ENCODE measurements at regions of chr11 and their contacts with region 1.

Region 1: DNA sequence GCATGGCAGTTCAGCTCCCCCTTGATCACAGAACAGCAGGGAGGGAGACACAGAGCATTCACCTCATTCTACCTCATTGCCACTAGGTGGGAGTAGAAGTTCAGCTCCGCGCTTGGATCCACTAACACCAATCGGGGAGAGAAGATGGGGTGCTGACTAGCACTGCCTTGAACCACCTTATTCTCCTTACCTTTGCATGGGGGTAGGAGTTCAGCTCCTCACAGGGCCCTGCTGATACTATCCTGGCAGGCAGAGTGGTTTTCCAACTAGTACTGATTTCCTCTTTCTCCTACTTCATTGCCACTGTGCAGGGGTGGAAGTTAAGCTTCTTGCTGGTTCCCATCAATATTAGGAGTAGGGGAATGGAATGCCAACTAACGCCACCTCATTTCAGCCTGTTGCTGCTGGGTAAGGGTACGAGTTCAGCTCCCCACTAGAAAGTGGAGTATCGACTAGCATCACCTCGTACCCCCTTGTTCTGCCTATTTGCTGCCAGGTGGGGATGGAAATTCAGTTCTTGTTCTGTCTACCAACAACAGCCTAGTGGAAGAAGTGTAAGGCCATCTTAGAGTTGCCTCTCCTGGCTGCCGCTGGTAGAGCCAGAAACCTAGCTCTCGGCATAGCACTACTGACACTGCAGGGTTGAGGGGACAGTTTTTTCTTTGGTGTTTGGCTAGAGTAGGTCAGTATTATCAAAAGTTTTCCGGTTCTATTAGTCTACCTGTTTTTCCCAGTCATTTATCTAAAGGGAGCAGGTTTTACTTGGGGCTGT is 550.9 kb upstream of the CCDC90B start:
- DNase-seq: peak; percentile 61 to 68
- H3K4me3 ChIP-seq: no peak overlapping the region
- H3K4me3 Mint-ChIP-seq: no peak overlapping the region
- H3K27ac Mint-ChIP-seq: no peak overlapping the region
- H3K4me1 ChIP-seq: no peaks in the 10 kb centered on the region
- H3K4me1 Mint-ChIP-seq: no peaks in the 10 kb centered on the region
- H3K27me3 ChIP-seq: no peaks in the 10 kb centered on the region
- H3K27me3 Mint-ChIP-seq: peaks cover 28% of the 10 kb centered on the region
- CTCF ChIP-seq: peak; percentile 95 to 98

Region 2: DNA sequence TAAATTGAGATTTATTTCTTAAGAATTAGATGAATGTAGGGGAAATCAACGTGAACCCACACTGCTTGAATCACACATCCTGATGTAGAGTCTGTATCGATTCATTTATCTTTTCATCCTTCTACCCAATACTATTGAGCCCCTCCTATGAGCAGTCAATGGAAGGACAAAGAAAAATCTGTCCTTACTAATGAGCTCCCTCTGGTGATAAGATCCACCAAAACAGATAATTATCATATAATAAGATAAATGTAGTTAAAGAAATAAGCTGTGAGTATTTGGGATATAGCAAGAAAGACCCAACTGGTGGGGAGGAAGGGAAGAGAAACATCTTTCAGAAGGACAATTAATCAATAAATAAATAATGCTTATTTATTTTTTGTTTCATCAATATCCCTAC is 165.8 kb before region 1 on chr11:
- CTCF ChIA-PET with region 1: no interaction called
- POLR2A ChIA-PET with region 1: no interaction called
- intact Hi-C with region 1: no loop called
- DNase-seq: no peak
- H3K4me3 ChIP-seq: no peak overlapping the region
- H3K4me3 Mint-ChIP-seq: no peak overlapping the region
- H3K27ac Mint-ChIP-seq: no peak overlapping the region
- H3K4me1 ChIP-seq: peaks cover 10% of the 10 kb centered on the region; the same call in 1 of the 2 replicates
- H3K4me1 Mint-ChIP-seq: no peaks in the 10 kb centered on the region
- H3K27me3 ChIP-seq: no peaks in the 10 kb centered on the region
- H3K27me3 Mint-ChIP-seq: no peaks in the 10 kb centered on the region
- CTCF ChIP-seq: peak in 1 of 2 experiments; percentile 11

Region 3: DNA sequence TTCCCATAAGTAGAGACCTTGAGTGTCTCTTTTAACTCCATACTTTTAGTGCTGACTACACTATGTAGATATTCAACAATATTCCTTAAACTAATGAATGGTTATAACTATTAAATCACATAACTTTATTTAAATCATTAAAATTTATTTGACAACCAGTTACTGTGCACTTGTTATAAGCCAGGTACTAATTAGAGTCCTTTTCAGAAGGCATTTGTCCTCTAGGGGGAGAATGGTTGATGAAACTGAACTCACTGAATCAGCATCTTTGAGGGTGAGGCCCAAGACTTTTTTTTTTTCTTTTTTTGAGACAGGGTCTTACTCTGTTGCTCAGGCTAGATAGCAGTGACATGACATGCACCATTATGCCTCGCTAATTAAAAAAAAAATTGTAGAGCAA is 35.3 kb before region 1 on chr11:
- CTCF ChIA-PET with region 1: no interaction called
- POLR2A ChIA-PET with region 1: no interaction called
- intact Hi-C with region 1: no loop called
- DNase-seq: no peak
- H3K4me3 ChIP-seq: no peak overlapping the region
- H3K4me3 Mint-ChIP-seq: no peak overlapping the region
- H3K27ac Mint-ChIP-seq: no peak overlapping the region
- H3K4me1 ChIP-seq: no peaks in the 10 kb centered on the region
- H3K4me1 Mint-ChIP-seq: no peaks in the 10 kb centered on the region
- H3K27me3 ChIP-seq: no peaks in the 10 kb centered on the region
- H3K27me3 Mint-ChIP-seq: peaks cover 12% of the 10 kb centered on the region
- CTCF ChIP-seq: peak; percentile 32 to 48

Region 4: GRCh38 chr11:83815736-83816135 is 21.3 kb before region 1 on chr11:
- CTCF ChIA-PET with region 1: no interaction called
- POLR2A ChIA-PET with region 1: no interaction called
- intact Hi-C with region 1: no loop called
- DNase-seq: no peak
- H3K4me3 ChIP-seq: no peak overlapping the region
- H3K4me3 Mint-ChIP-seq: no peak overlapping the region
- H3K27ac Mint-ChIP-seq: no peak overlapping the region
- H3K4me1 ChIP-seq: no peaks in the 10 kb centered on the region
- H3K4me1 Mint-ChIP-seq: no peaks in the 10 kb centered on the region
- H3K27me3 ChIP-seq: no peaks in the 10 kb centered on the region
- H3K27me3 Mint-ChIP-seq: no peaks in the 10 kb centered on the region
- CTCF ChIP-seq: no peak

Region 5: DNA sequence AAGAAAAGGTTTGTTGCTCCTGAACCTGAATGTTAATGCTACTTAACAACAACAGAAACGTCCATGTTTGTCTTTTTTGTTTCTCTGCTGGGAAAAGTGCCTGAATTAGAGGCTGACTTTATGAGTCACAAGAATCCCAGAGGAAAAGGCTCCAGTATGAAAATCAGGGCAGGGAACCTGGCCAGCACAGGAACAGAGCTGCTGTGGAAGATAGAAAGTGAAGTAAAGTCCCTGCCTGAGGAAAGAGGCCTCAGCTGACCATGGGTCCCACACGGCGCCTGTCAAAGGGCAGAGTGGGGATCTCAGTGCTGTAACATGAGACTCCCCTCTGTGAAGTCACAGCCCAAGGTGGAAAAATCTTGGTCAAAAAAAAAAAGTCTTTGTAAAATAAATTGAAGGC is 81.4 kb after region 1 on chr11:
- CTCF ChIA-PET with region 1: no interaction called
- POLR2A ChIA-PET with region 1: no interaction called
- intact Hi-C with region 1: loop called (anchors 5 kb)
- DNase-seq: no peak
- H3K4me3 ChIP-seq: no peak overlapping the region
- H3K4me3 Mint-ChIP-seq: no peak overlapping the region
- H3K27ac Mint-ChIP-seq: no peak overlapping the region
- H3K4me1 ChIP-seq: peaks cover 24% of the 10 kb centered on the region
- H3K4me1 Mint-ChIP-seq: peaks cover 6% of the 10 kb centered on the region
- H3K27me3 ChIP-seq: no peaks in the 10 kb centered on the region
- H3K27me3 Mint-ChIP-seq: no peaks in the 10 kb centered on the region
- CTCF ChIP-seq: no peak

Region 6: DNA sequence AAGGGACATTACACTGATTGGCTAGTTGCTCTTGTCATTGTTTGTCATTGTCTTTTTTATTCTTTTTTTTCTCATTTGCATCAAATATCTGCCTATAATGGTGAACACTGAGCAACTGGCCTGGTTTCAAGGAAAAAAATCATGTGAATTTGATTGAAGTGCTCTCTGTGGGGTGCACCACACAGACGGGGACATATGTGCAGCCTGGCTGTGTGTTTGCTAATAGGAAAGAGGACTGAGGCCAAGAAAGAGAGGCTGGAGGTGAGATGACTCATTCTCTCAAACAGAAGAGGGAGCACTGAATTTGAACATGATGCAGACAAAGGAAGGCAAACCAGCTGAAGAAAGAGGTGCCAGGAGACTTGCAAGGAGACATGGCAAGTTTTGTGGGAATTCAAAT is 134.0 kb after region 1 on chr11:
- CTCF ChIA-PET with region 1: interaction called, 3 read pairs
- POLR2A ChIA-PET with region 1: no interaction called
- intact Hi-C with region 1: loop called (anchors 5 kb)
- DNase-seq: no peak
- H3K4me3 ChIP-seq: no peak overlapping the region
- H3K4me3 Mint-ChIP-seq: no peak overlapping the region
- H3K27ac Mint-ChIP-seq: no peak overlapping the region
- H3K4me1 ChIP-seq: no peaks in the 10 kb centered on the region
- H3K4me1 Mint-ChIP-seq: no peaks in the 10 kb centered on the region
- H3K27me3 ChIP-seq: no peaks in the 10 kb centered on the region
- H3K27me3 Mint-ChIP-seq: peaks cover 5% of the 10 kb centered on the region
- CTCF ChIP-seq: no peak

Region 7: DNA sequence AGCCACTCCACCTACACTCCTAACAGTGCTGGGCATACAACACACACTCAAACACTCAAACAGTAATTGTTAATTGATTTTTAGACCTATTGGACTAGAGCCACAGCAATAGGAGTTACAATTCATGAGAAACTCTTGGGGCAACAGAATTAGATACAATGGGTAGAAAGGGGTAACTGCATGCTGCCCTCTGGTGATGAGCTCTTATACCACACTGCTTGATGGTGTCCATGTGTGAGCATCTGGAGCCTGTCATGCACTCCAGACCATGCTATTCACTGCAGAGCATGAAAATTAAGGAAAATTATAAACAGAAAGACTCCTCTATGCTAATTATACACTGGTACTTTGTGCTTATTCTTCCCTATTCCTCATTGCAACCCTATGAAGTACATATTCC is 424.6 kb after region 1 on chr11:
- CTCF ChIA-PET with region 1: interaction called, 4 read pairs
- POLR2A ChIA-PET with region 1: no interaction called
- intact Hi-C with region 1: loop called (anchors 1 kb)
- DNase-seq: no peak
- H3K4me3 ChIP-seq: no peak overlapping the region
- H3K4me3 Mint-ChIP-seq: no peak overlapping the region
- H3K27ac Mint-ChIP-seq: no peak overlapping the region
- H3K4me1 ChIP-seq: no peaks in the 10 kb centered on the region
- H3K4me1 Mint-ChIP-seq: no peaks in the 10 kb centered on the region
- H3K27me3 ChIP-seq: no peaks in the 10 kb centered on the region; the same call in 1 of the 2 replicates
- H3K27me3 Mint-ChIP-seq: peaks cover 5% of the 10 kb centered on the region
- CTCF ChIP-seq: peak; percentile 15 to 41

Region 8: DNA sequence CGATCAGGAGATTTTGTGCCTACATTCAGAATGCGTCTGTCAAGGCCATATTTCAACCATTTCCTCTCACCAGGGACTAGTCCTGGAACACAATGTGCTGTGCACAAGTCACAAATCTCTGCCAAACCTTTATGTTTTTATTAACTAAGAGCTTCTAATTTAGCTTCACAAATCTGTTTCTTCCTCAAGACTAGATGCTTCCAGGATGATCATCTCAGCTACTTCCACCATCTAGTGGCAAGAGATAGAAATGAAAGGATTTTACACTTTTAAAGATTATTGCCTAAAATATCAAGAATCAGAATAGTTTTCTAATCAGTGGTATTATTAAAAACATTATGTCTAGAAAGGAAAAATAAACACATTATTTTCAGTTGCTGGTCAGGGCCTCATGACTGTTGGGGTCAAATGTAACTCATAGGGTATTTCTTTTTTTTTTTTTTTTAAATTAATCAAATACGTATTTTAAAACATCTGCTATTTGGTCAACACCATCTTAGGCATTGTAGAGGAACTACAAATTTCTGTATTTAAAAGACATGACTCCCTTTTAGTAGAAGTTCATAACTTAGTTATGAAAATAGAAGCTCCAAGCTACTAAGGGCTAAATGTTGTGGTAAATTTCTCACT is 687.5 kb after region 1 on chr11:
- CTCF ChIA-PET with region 1: interaction called, 5 read pairs
- POLR2A ChIA-PET with region 1: no interaction called
- intact Hi-C with region 1: loop called (anchors 1 kb)
- DNase-seq: no peak
- H3K4me3 ChIP-seq: no peak overlapping the region
- H3K4me3 Mint-ChIP-seq: no peak overlapping the region
- H3K27ac Mint-ChIP-seq: no peak overlapping the region
- H3K4me1 ChIP-seq: no peaks in the 10 kb centered on the region
- H3K4me1 Mint-ChIP-seq: no peaks in the 10 kb centered on the region
- H3K27me3 ChIP-seq: no peaks in the 10 kb centered on the region; the same call in 1 of the 2 replicates
- H3K27me3 Mint-ChIP-seq: peaks cover 13% of the 10 kb centered on the region
- CTCF ChIP-seq: peak; percentile 74 to 78

Measured in Caco-2 (cell line).